CD8-positive, alpha-beta T cell (primary cell): ENCODE measurements at regions of chr6 and their contacts with region 1.

Region 1: GRCh38 chr6:26003102-26003694 is 40.6 kb downstream of the TRIM38 start:
- DNase-seq: peak in 7 of 9 experiments; percentile 24 to 71 (median 55)
- ATAC-seq: peak; percentile 72
- H3K4me3 ChIP-seq: no peak overlapping the region
- H3K4me3 Mint-ChIP-seq: no peak overlapping the region
- H3K27ac ChIP-seq: no peak overlapping the region
- H3K27ac Mint-ChIP-seq: no peak overlapping the region
- H3K4me1 ChIP-seq: no peaks in the 10 kb centered on the region
- H3K4me1 Mint-ChIP-seq: peaks cover 3% of the 10 kb centered on the region
- H3K27me3 ChIP-seq: no peaks in the 10 kb centered on the region
- H3K27me3 Mint-ChIP-seq: no peaks in the 10 kb centered on the region
- CTCF ChIP-seq: peak; percentile 94

Region 2: DNA sequence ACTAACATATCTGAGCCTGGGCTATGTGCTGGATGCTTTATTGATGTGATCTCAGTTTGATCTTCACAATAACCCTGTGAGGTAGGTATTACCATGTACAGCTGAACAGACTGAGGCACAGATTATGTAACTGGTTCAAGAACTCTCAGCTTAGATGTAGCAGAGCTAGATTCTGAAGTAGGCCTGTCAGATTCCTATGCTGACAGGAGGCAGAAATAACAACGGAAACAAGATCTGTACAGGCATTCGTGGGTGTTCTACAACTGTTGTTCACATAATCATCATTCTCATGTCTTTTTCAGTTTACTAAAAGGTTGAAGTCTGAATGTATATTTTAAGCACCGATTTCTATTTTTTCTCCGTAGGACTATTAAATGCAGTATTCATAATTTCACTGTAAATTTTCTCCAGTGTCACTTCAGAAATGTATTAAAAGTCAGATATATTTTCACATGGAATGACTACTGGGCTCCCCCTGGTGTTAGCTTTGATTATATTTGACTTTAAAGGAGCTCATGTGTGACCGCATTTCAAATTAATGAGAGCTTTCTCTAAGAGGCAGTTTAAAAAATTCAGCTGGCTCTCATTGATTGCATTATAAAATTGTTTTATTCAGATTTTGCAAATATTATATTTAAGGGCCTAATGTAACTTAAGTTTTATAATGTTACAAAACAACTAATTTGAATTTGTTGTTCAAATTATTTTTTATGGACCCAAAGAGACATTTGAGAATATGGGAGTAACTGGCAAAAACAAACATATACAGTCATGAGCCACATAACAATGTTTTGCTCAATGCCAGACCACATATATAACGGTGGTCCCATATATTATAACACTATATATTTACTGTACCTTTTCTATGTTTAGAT is 285.1 kb before region 1 on chr6:
- CTCF ChIA-PET with region 1: interaction called, 14 read pairs
- POLR2A ChIA-PET with region 1: no interaction called
- intact Hi-C with region 1: loop called in 1 of 2 experiments (anchors 1 kb)
- DNase-seq: peak in 2 of 9 experiments; percentile 23 to 33
- ATAC-seq: no peak
- H3K4me3 ChIP-seq: no peak overlapping the region
- H3K4me3 Mint-ChIP-seq: no peak overlapping the region
- H3K27ac ChIP-seq: no peak overlapping the region
- H3K27ac Mint-ChIP-seq: no peak overlapping the region
- H3K4me1 ChIP-seq: no peaks in the 10 kb centered on the region
- H3K4me1 Mint-ChIP-seq: no peaks in the 10 kb centered on the region
- H3K27me3 ChIP-seq: no peaks in the 10 kb centered on the region
- H3K27me3 Mint-ChIP-seq: peaks cover 14% of the 10 kb centered on the region
- CTCF ChIP-seq: peak; percentile 52

Region 3: GRCh38 chr6:25788305-25788922 is 214.8 kb before region 1 on chr6:
- CTCF ChIA-PET with region 1: interaction called, 24 read pairs
- POLR2A ChIA-PET with region 1: no interaction called
- intact Hi-C with region 1: no loop called
- DNase-seq: peak in 7 of 9 experiments; percentile 11 to 63 (median 41)
- ATAC-seq: peak; percentile 52
- H3K4me3 ChIP-seq: no peak overlapping the region
- H3K4me3 Mint-ChIP-seq: no peak overlapping the region
- H3K27ac ChIP-seq: no peak overlapping the region
- H3K27ac Mint-ChIP-seq: no peak overlapping the region
- H3K4me1 ChIP-seq: no peaks in the 10 kb centered on the region
- H3K4me1 Mint-ChIP-seq: no peaks in the 10 kb centered on the region
- H3K27me3 ChIP-seq: no peaks in the 10 kb centered on the region
- H3K27me3 Mint-ChIP-seq: peaks cover 3% of the 10 kb centered on the region
- CTCF ChIP-seq: peak; percentile 37

Region 4: GRCh38 chr6:25962149-25963127 is 40.8 kb before region 1 on chr6 and contains the start of gene TRIM38:
- CTCF ChIA-PET with region 1: interaction called, 11 read pairs
- POLR2A ChIA-PET with region 1: interaction called, 3 read pairs
- intact Hi-C with region 1: no loop called
- DNase-seq: peak; percentile 50 to 95 (median 77)
- ATAC-seq: peak; percentile 86
- H3K4me3 ChIP-seq: peak within 1 kb of the TSS; percentile 76 to 86
- H3K4me3 Mint-ChIP-seq: peak within 1 kb of the TSS; percentile 95
- H3K27ac ChIP-seq: peak within 1 kb of the TSS; percentile 91 to 95
- H3K27ac Mint-ChIP-seq: peak within 1 kb of the TSS; percentile 98
- H3K4me1 ChIP-seq: peaks cover 64% of the 10 kb centered on the region
- H3K4me1 Mint-ChIP-seq: peaks cover 81% of the 10 kb centered on the region
- H3K27me3 ChIP-seq: no peaks in the 10 kb centered on the region
- H3K27me3 Mint-ChIP-seq: no peaks in the 10 kb centered on the region
- CTCF ChIP-seq: no peak
- total RNA-seq, gene TRIM38: 13.2 to 13.6 TPM

Region 5: GRCh38 chr6:25971187-25971811 is 31.9 kb before region 1 on chr6:
- CTCF ChIA-PET with region 1: interaction called, 11 read pairs
- POLR2A ChIA-PET with region 1: no interaction called
- intact Hi-C with region 1: no loop called
- DNase-seq: no peak
- ATAC-seq: no peak
- H3K4me3 ChIP-seq: no peak overlapping the region
- H3K4me3 Mint-ChIP-seq: no peak overlapping the region
- H3K27ac ChIP-seq: no peak overlapping the region
- H3K27ac Mint-ChIP-seq: peak overlapping the region; percentile 15
- H3K4me1 ChIP-seq: peaks cover 26% of the 10 kb centered on the region
- H3K4me1 Mint-ChIP-seq: peaks cover 66% of the 10 kb centered on the region
- H3K27me3 ChIP-seq: no peaks in the 10 kb centered on the region
- H3K27me3 Mint-ChIP-seq: no peaks in the 10 kb centered on the region
- CTCF ChIP-seq: no peak

Region 6: GRCh38 chr6:25981568-25982263 is 21.5 kb before region 1 on chr6:
- CTCF ChIA-PET with region 1: interaction called, 10 read pairs
- POLR2A ChIA-PET with region 1: no interaction called
- intact Hi-C with region 1: no loop called
- DNase-seq: no peak
- ATAC-seq: no peak
- H3K4me3 ChIP-seq: no peak overlapping the region
- H3K4me3 Mint-ChIP-seq: no peak overlapping the region
- H3K27ac ChIP-seq: no peak overlapping the region
- H3K27ac Mint-ChIP-seq: peak overlapping the region; percentile 28
- H3K4me1 ChIP-seq: no peaks in the 10 kb centered on the region
- H3K4me1 Mint-ChIP-seq: peaks cover 15% of the 10 kb centered on the region
- H3K27me3 ChIP-seq: no peaks in the 10 kb centered on the region
- H3K27me3 Mint-ChIP-seq: no peaks in the 10 kb centered on the region
- CTCF ChIP-seq: no peak

Region 7: GRCh38 chr6:26020329-26021000 is 17.3 kb after region 1 on chr6:
- CTCF ChIA-PET with region 1: interaction called, 48 read pairs
- POLR2A ChIA-PET with region 1: interaction called, 43 read pairs
- intact Hi-C with region 1: no loop called
- DNase-seq: peak; percentile 69 to 95 (median 78)
- ATAC-seq: peak; percentile 47
- H3K4me3 ChIP-seq: peak overlapping the region; percentile 85 to 88
- H3K4me3 Mint-ChIP-seq: peak overlapping the region; percentile 88
- H3K27ac ChIP-seq: peak overlapping the region; percentile 95 to 98
- H3K27ac Mint-ChIP-seq: peak overlapping the region; percentile 99
- H3K4me1 ChIP-seq: peaks cover 10% of the 10 kb centered on the region
- H3K4me1 Mint-ChIP-seq: peaks cover 41% of the 10 kb centered on the region
- H3K27me3 ChIP-seq: no peaks in the 10 kb centered on the region
- H3K27me3 Mint-ChIP-seq: no peaks in the 10 kb centered on the region
- CTCF ChIP-seq: no peak

Region 8: GRCh38 chr6:26234421-26235296 is 231.5 kb after region 1 on chr6:
- CTCF ChIA-PET with region 1: no interaction called
- POLR2A ChIA-PET with region 1: no interaction called
- intact Hi-C with region 1: no loop called
- DNase-seq: peak; percentile 55 to 88 (median 66)
- ATAC-seq: peak; percentile 63
- H3K4me3 ChIP-seq: peak overlapping the region; percentile 66 to 76
- H3K4me3 Mint-ChIP-seq: peak overlapping the region; percentile 85
- H3K27ac ChIP-seq: peak overlapping the region; percentile 84 to 92
- H3K27ac Mint-ChIP-seq: peak overlapping the region; percentile 93
- H3K4me1 ChIP-seq: peaks cover 14% of the 10 kb centered on the region
- H3K4me1 Mint-ChIP-seq: peaks cover 31% of the 10 kb centered on the region
- H3K27me3 ChIP-seq: no peaks in the 10 kb centered on the region
- H3K27me3 Mint-ChIP-seq: no peaks in the 10 kb centered on the region
- CTCF ChIP-seq: no peak

Region 9: GRCh38 chr6:26270903-26271667 is 267.9 kb after region 1 on chr6:
- CTCF ChIA-PET with region 1: no interaction called
- POLR2A ChIA-PET with region 1: no interaction called
- intact Hi-C with region 1: no loop called
- DNase-seq: peak; percentile 68 to 91 (median 80)
- ATAC-seq: peak; percentile 22
- H3K4me3 ChIP-seq: peak overlapping the region; percentile 65 to 67
- H3K4me3 Mint-ChIP-seq: no peak overlapping the region
- H3K27ac ChIP-seq: peak overlapping the region; percentile 73 to 92
- H3K27ac Mint-ChIP-seq: peak overlapping the region; percentile 73
- H3K4me1 ChIP-seq: peaks cover 22% of the 10 kb centered on the region
- H3K4me1 Mint-ChIP-seq: peaks cover 13% of the 10 kb centered on the region
- H3K27me3 ChIP-seq: no peaks in the 10 kb centered on the region
- H3K27me3 Mint-ChIP-seq: no peaks in the 10 kb centered on the region
- CTCF ChIP-seq: no peak

Region 10: DNA sequence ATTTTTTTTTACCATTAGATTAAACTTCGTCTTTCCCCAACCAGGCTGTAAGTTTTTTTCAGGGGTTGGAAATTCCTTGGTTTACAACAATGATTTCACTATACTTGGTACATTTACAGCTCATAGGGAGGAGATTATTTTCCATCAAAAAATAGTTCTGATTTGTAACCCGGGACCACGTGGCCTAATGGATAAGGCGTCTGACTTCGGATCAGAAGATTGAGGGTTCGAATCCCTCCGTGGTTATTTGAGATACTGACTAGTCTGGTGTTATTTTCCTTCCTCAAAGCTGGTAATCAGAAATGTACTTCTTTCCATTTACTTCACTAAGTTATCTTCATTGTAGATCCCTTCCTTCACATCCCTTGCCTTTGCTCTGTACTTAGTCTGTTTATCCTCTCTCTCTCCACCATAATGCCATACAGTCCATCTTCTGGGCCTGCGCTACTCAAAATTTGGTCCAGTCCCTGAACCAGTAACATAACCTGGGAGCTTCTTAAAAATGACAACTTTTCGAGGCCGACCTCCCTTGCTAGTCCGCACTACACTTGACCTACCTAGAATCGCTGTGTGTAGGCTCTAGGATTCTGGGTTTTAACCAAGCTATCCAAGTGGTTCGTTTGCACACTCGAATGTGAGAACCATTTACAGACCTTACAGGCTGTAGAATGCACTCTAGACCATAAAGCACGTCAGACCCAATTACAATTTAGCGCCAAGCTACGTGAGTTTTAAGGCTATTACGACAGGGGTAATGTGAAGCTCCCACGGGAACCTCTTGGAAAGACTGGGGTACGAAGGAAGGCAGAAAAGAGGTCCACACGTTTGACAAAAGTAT is 319.7 kb after region 1 on chr6:
- CTCF ChIA-PET with region 1: no interaction called
- POLR2A ChIA-PET with region 1: no interaction called
- intact Hi-C with region 1: no loop called
- DNase-seq: peak in 8 of 9 experiments; percentile 32 to 86 (median 58)
- ATAC-seq: peak; percentile 65
- H3K4me3 ChIP-seq: peak overlapping the region; percentile 55 to 64
- H3K4me3 Mint-ChIP-seq: peak overlapping the region; percentile 88
- H3K27ac ChIP-seq: no peak overlapping the region
- H3K27ac Mint-ChIP-seq: peak overlapping the region; percentile 90
- H3K4me1 ChIP-seq: peaks cover 5% of the 10 kb centered on the region
- H3K4me1 Mint-ChIP-seq: peaks cover 24% of the 10 kb centered on the region
- H3K27me3 ChIP-seq: peaks cover 0 to 2% of the 10 kb centered on the region in 2 experiments
- H3K27me3 Mint-ChIP-seq: peaks cover 15% of the 10 kb centered on the region
- CTCF ChIP-seq: no peak